T-cell (primary cell): ENCODE measurements at regions of chr12 and their contacts with region 1.

Region 1: DNA sequence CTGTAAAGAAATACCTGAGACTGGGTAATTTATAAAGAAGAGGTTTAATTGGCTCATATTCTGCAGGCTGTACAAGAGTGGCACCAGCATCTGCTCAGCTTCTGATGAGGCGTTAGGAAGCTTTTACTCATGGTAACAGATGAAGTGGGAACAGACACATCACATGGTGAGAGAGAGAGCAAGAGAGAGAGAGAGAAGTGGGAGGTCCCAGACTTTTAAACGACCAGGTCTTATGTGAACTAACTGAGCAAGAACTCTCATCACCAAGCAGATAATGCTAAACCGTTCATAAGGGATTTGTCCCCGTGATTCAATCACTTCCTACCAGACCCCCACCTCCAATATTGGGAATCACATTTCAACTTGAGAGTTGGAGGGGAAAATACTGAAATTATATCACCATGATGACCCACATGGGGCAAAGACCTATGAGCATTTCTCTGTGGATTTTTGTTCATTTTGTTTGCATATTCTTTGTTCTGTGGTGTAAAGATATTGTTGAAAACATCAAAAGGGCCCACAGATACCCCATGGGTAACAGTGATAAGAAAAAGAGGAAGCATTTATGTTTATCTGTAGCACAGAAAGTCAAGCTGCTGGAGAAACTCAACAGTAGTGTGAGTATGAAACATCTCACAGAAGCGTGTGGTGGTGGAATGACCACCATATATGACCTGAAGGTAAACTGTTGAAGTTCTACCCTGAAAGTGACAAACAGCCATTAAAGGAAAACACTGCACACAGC is 135.2 kb upstream of the PDE3A start:
- DNase-seq: no peak
- ATAC-seq: no peak
- H3K4me3 ChIP-seq: no peak overlapping the region
- H3K4me3 Mint-ChIP-seq: no peak overlapping the region
- H3K27ac ChIP-seq: no peak overlapping the region
- H3K27ac Mint-ChIP-seq: no peak overlapping the region
- H3K4me1 ChIP-seq: no peaks in the 10 kb centered on the region
- H3K4me1 Mint-ChIP-seq: no peaks in the 10 kb centered on the region
- H3K27me3 ChIP-seq: no peaks in the 10 kb centered on the region
- H3K27me3 Mint-ChIP-seq: no peaks in the 10 kb centered on the region

Region 2: DNA sequence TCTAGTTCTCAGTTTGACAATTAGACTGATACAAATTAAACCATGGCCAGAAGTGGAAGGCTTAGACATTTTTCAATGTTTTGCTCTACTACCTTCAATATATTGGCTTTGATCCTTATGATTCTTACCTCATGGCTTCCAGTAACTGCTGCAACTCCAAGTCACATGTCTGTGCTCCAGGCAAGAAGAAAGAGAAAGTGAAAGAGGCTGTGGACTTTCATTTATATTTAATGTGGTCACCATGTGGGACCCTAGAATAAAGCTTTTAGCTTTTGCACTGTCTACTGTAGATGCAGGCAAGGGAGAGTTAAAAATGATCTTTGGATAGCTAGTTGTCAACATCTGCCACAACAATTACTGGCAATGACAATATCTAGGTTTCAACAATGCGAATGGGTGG is 79.0 kb before region 1 on chr12:
- CTCF ChIA-PET with region 1: no interaction called
- POLR2A ChIA-PET with region 1: interaction called in 1 of 2 experiments, 14 read pairs
- DNase-seq: no peak
- ATAC-seq: no peak
- H3K4me3 ChIP-seq: no peak overlapping the region
- H3K4me3 Mint-ChIP-seq: no peak overlapping the region
- H3K27ac ChIP-seq: no peak overlapping the region
- H3K27ac Mint-ChIP-seq: no peak overlapping the region
- H3K4me1 ChIP-seq: no peaks in the 10 kb centered on the region
- H3K4me1 Mint-ChIP-seq: no peaks in the 10 kb centered on the region
- H3K27me3 ChIP-seq: no peaks in the 10 kb centered on the region
- H3K27me3 Mint-ChIP-seq: no peaks in the 10 kb centered on the region

Region 3: GRCh38 chr12:20604408-20605067 is 371.4 kb after region 1 on chr12:
- CTCF ChIA-PET with region 1: no interaction called
- POLR2A ChIA-PET with region 1: no interaction called
- DNase-seq: no peak
- ATAC-seq: no peak
- H3K4me3 ChIP-seq: no peak overlapping the region
- H3K4me3 Mint-ChIP-seq: no peak overlapping the region
- H3K27ac ChIP-seq: no peak overlapping the region
- H3K27ac Mint-ChIP-seq: no peak overlapping the region
- H3K4me1 ChIP-seq: no peaks in the 10 kb centered on the region
- H3K4me1 Mint-ChIP-seq: no peaks in the 10 kb centered on the region
- H3K27me3 ChIP-seq: no peaks in the 10 kb centered on the region
- H3K27me3 Mint-ChIP-seq: peaks cover 0 to 7% of the 10 kb centered on the region in 2 donors